CD8-positive, alpha-beta T cell (primary cell): ENCODE measurements at regions of chr6 and their contacts with region 1.

Region 1: GRCh38 chr6:26204332-26205165 is 117.3 kb downstream of the HFE start:
- DNase-seq: peak; percentile 75 to 98 (median 84)
- ATAC-seq: peak; percentile 74
- H3K4me3 ChIP-seq: peak overlapping the region; percentile 54 to 70
- H3K4me3 Mint-ChIP-seq: no peak overlapping the region
- H3K27ac ChIP-seq: peak overlapping the region; percentile 91
- H3K27ac Mint-ChIP-seq: no peak overlapping the region
- H3K4me1 ChIP-seq: peaks cover 31% of the 10 kb centered on the region
- H3K4me1 Mint-ChIP-seq: peaks cover 23% of the 10 kb centered on the region
- H3K27me3 ChIP-seq: no peaks in the 10 kb centered on the region
- H3K27me3 Mint-ChIP-seq: no peaks in the 10 kb centered on the region
- CTCF ChIP-seq: no peak

Region 2: DNA sequence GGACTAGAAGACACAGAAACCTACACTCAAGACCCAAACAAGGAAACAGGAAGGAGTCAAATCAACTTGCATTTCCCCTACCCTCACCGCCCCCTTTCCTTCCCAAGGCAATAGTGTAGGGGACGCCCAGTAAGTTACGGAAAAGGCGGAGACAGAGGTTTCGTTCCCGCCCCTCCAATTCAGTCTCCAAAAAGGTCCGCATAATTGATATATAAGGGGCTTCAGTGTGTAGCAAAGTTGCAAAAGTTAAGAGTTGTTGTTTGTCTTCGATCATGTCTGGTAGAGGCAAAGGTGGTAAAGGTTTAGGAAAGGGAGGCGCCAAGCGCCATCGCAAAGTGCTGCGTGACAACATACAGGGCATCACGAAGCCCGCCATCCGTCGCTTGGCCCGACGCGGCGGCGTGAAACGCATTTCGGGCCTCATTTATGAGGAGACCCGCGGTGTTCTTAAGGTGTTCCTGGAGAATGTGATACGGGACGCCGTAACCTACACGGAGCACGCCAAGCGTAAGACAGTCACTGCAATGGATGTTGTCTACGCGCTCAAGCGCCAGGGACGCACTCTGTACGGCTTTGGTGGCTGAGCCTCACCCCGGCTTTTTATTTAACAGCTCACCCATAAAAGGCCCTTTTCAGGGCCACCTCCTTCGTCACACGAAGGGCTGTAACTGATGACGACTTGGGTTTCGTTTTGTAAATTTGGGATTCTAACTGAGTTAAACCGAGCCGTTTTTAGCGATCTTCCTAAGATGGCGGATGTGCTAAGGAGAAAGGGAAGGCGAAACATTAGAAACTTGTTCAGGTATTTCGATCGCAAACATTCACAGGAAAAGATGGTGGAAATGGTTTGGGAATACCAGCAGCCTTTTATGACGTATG is 35.8 kb after region 1 on chr6:
- CTCF ChIA-PET with region 1: interaction called, 3 read pairs
- POLR2A ChIA-PET with region 1: interaction called, 428 read pairs
- intact Hi-C with region 1: loop called in 1 of 2 experiments (anchors 2 kb)
- DNase-seq: peak; percentile 40 to 93 (median 67)
- ATAC-seq: peak; percentile 81
- H3K4me3 ChIP-seq: peak overlapping the region; percentile 50 to 62
- H3K4me3 Mint-ChIP-seq: peak overlapping the region; percentile 88
- H3K27ac ChIP-seq: peak overlapping the region; percentile 74 to 88
- H3K27ac Mint-ChIP-seq: peak overlapping the region; percentile 98
- H3K4me1 ChIP-seq: peaks cover 8% of the 10 kb centered on the region
- H3K4me1 Mint-ChIP-seq: peaks cover 21% of the 10 kb centered on the region
- H3K27me3 ChIP-seq: no peaks in the 10 kb centered on the region
- H3K27me3 Mint-ChIP-seq: no peaks in the 10 kb centered on the region
- CTCF ChIP-seq: no peak

Region 3: GRCh38 chr6:27994616-27995015 is 1790.1 kb after region 1 on chr6:
- CTCF ChIA-PET with region 1: no interaction called
- POLR2A ChIA-PET with region 1: no interaction called
- intact Hi-C with region 1: no loop called
- DNase-seq: no peak
- ATAC-seq: no peak
- H3K4me3 ChIP-seq: no peak overlapping the region
- H3K4me3 Mint-ChIP-seq: no peak overlapping the region
- H3K27ac ChIP-seq: no peak overlapping the region
- H3K27ac Mint-ChIP-seq: no peak overlapping the region
- H3K4me1 ChIP-seq: no peaks in the 10 kb centered on the region
- H3K4me1 Mint-ChIP-seq: no peaks in the 10 kb centered on the region
- H3K27me3 ChIP-seq: peaks cover 2 to 3% of the 10 kb centered on the region in 2 experiments
- H3K27me3 Mint-ChIP-seq: peaks cover 32% of the 10 kb centered on the region
- CTCF ChIP-seq: no peak